ENCODE measurements at regions of chr12 and their contacts with region 1.

Region 1: DNA sequence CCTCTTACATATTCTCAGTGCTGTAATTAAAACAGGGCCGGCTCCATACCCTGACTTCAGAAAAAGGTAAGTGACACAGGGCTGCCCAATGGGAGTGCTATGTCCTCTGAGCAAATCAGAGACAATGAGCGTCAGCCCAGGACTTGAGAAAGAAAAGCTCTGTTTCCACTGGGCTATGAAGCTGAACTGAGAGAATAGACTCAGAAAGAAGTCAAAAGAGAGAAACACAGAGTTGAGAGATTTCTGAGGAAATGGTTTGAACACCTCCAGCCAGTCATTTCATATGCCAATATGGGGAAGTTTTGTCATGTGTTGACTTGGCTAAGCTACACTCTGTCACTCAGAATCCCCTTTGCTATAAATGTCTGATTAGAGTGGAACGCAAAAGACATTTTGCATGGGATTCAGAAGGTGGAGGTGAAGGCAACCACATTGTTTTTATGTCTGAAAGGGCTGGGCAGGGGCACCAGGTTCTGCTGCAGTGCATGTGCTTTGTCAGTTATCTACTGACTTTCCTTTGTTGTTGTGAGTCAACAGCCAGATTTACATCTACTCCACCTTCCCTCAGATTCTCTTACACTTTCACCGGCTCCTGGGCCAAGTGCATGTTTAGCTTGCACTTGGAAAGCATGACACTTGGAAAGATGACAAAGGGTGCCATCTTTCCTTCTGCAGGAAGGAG is 313.3 kb downstream of the DUSP6 start:
- DNase-seq: no peak
- H3K4me3 Mint-ChIP-seq: no peak overlapping the region
- H3K27ac Mint-ChIP-seq: peak overlapping the region; percentile 81
- H3K4me1 Mint-ChIP-seq: peaks cover 66% of the 10 kb centered on the region
- H3K27me3 Mint-ChIP-seq: no peaks in the 10 kb centered on the region

Region 2: GRCh38 chr12:88781909-88782308 is 257.1 kb before region 1 on chr12:
- CTCF ChIA-PET with region 1: no interaction called
- POLR2A ChIA-PET with region 1: no interaction called
- DNase-seq: no peak
- H3K4me3 Mint-ChIP-seq: no peak overlapping the region
- H3K27ac Mint-ChIP-seq: no peak overlapping the region
- H3K4me1 Mint-ChIP-seq: no peaks in the 10 kb centered on the region
- H3K27me3 Mint-ChIP-seq: no peaks in the 10 kb centered on the region

Region 3: DNA sequence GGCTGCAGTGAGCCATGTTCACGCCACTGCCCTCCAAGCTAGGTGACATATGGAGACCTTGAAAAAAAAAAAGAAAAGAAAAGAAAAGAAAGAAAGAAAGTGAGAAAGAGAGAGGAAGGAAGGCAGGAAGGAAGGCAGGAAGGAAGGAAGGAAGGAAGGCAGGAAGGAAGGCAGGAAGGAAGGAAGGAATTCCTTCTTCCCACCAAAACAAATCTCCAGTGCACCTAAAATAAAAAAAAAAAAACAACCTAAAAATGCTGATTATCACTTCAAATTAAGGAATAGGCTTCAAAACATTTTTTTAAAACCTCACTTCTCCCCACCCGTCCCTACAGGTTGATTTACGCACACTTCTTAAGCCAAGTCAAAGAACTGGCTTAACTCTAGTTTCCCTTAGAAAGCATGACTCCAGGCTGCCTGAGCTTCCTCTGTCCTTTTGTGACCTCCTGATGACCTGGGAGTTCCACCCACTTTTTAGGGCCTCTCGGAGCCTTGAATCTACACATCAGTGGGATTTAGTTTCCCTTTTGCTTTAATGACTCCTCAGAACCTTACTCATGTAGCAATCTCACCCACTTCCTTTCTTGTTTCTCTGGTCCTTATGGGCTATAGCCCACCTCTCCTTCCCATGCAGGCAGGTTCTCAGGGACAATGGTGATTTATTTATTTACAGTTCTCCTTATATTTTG is 294.7 kb after region 1 on chr12:
- CTCF ChIA-PET with region 1: interaction called, 3 read pairs
- POLR2A ChIA-PET with region 1: interaction called, 15 read pairs
- DNase-seq: peak; percentile 55
- H3K4me3 Mint-ChIP-seq: peak overlapping the region; percentile 40
- H3K27ac Mint-ChIP-seq: peak overlapping the region; percentile 42
- H3K4me1 Mint-ChIP-seq: peaks cover 33% of the 10 kb centered on the region
- H3K27me3 Mint-ChIP-seq: no peaks in the 10 kb centered on the region

Measured in activated CD4-positive, alpha-beta T cell treated with anti-CD3 and anti-CD28 coated beads, Interleukin-2, amount 10 ng/mL, durations not matched to agents 7 days and 5 days (primary cell).